Activated naive CD4-positive, alpha-beta T cell treated with anti-CD3 and anti-CD28 coated beads, Interleukin-2, amount 10 ng/mL, durations not matched to agents 7 days and 5 days (primary cell): ENCODE measurements at regions of chr14 and their contacts with region 1.

Region 1: DNA sequence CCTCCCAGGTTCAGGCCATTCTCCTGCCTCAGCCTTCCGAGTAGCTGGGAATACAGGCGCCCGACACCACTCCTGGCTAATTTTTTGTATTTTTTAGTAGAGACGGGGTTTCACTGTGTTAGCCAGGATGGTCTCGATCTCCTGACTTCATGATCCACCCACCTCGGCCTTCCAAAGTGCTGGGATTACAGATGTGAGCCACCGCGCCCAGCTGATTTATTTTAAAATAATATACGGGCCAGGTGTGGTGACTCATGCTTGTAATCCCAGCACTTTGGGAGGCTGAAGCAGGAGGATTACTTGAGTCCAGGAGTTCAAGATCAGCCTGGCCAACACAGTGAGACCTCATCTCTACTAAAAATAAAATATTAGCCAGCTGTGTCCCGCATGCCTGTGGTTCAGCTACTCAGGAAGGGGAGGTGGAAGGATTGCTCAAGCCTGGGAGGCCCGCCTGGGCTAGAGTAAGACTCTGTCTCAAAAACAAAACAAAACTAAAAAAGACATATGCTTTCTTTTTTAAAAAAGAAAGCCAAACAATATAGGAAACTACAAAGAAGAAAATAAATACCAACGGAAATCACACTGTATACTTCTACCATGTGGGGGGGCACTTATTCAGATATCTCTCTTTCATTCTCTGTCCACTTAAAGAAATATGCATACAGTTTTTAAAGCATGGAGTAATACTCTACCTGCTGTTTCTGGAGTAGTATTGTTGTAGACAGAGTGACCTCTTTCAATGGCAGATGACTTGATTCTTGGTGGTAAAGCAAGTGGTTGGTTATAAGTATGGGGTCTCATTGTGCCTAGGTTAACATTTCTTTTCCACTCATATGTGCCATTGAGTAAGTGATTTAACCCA is 930 bp upstream of the MIA2 start:
- DNase-seq: peak; percentile 37
- H3K4me3 Mint-ChIP-seq: no peak overlapping the region
- H3K27ac Mint-ChIP-seq: peak overlapping the region; percentile 29
- H3K4me1 Mint-ChIP-seq: peaks cover 59% of the 10 kb centered on the region
- H3K27me3 Mint-ChIP-seq: no peaks in the 10 kb centered on the region

Region 2: DNA sequence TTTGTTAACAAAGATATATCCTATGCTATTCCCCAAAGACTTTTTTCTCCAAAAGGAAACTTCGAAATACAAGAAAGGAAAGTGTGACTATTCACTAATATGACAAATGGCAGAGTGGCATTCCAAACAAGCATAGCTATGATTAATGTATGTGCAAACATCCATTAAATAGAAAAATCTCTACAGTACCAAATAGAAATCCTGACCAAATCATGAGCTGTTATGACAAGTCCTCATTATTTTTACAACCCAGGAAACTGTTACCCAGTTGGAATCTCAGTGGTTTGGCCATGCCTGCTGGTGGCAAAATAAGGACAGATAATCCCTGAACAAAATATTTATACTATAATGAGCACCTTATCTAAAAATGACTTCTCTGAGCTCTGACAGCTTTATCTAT is 331.9 kb before region 1 on chr14:
- CTCF ChIA-PET with region 1: no interaction called
- DNase-seq: no peak
- H3K4me3 Mint-ChIP-seq: no peak overlapping the region
- H3K27ac Mint-ChIP-seq: no peak overlapping the region
- H3K4me1 Mint-ChIP-seq: no peaks in the 10 kb centered on the region
- H3K27me3 Mint-ChIP-seq: no peaks in the 10 kb centered on the region

Region 3: DNA sequence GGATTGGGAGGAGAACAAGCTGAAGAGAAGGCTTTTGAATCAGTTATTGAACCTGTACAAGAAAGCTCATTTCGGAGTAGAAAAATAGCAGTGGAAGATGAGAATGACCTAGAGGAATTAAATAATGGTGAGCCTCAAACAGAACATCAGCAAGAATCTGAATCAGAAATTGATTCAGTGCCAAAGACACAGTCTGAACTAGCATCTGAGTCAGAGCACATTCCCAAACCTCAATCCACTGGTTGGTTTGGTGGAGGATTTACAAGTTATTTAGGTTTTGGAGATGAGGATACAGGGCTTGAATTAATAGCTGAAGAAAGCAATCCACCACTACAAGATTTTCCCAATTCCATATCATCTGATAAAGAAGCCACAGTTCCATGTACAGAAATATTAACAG is 14.5 kb after region 1 on chr14:
- CTCF ChIA-PET with region 1: no interaction called
- DNase-seq: no peak
- H3K4me3 Mint-ChIP-seq: no peak overlapping the region
- H3K27ac Mint-ChIP-seq: no peak overlapping the region
- H3K4me1 Mint-ChIP-seq: no peaks in the 10 kb centered on the region
- H3K27me3 Mint-ChIP-seq: peaks cover 20% of the 10 kb centered on the region

Region 4: DNA sequence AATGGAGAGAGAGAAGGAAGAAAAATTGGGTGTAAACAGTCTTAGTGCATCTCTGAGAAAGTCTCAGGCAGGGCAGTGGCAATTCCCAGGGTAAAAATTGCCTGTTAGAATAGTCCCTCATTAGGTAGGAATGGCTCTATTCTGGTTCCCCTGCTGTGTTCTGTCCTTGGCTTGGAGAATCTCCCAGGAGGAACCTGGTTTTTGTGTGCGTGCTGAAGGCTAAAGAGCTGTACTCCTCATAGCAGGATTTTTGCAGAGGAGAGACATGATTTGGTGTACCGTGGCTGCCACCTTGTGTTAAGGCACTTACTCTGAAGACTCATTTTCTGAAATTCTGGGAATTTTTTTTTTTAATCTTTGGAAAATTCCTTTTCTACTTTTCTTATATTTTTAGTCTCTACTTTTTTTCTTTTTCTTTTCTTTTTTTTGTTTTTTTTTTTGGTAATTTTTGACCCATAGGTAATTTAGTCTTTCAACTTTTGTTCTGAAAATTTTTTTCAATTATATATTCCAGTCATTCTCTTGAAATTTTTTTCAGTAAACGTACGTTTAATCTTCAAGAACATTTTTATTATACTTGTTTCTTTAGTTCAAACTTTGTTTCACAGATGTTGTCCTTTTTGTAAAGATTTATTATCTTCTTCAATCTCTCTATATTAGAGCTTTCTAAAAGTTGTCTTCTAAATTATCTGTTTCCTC is 135.6 kb after region 1 on chr14:
- CTCF ChIA-PET with region 1: interaction called, 20 read pairs
- DNase-seq: peak; percentile 59
- H3K4me3 Mint-ChIP-seq: no peak overlapping the region
- H3K27ac Mint-ChIP-seq: no peak overlapping the region
- H3K4me1 Mint-ChIP-seq: no peaks in the 10 kb centered on the region
- H3K27me3 Mint-ChIP-seq: no peaks in the 10 kb centered on the region

Region 5: GRCh38 chr14:39426605-39427004 is 193.8 kb after region 1 on chr14:
- CTCF ChIA-PET with region 1: interaction called, 29 read pairs
- DNase-seq: no peak
- H3K4me3 Mint-ChIP-seq: no peak overlapping the region
- H3K27ac Mint-ChIP-seq: no peak overlapping the region
- H3K4me1 Mint-ChIP-seq: peaks cover 47% of the 10 kb centered on the region
- H3K27me3 Mint-ChIP-seq: no peaks in the 10 kb centered on the region

Region 6: GRCh38 chr14:39432179-39432618 is 199.4 kb after region 1 on chr14 and contains the start of gene FBXO33:
- CTCF ChIA-PET with region 1: interaction called, 29 read pairs
- DNase-seq: peak; percentile 97
- H3K4me3 Mint-ChIP-seq: peak within 1 kb of the TSS; percentile 95
- H3K27ac Mint-ChIP-seq: peak within 1 kb of the TSS; percentile 100
- H3K4me1 Mint-ChIP-seq: peaks cover 43% of the 10 kb centered on the region
- H3K27me3 Mint-ChIP-seq: no peaks in the 10 kb centered on the region